Ascending aorta (tissue), 2 donors: ENCODE measurements at regions of chr12 and their contacts with region 1.

Region 1: GRCh38 chr12:70576346-70577282 is 60.6 kb downstream of the PTPRB start:
- DNase-seq: no peak
- H3K4me3 ChIP-seq: no peak overlapping the region
- H3K27ac ChIP-seq: no peak overlapping the region
- H3K4me1 ChIP-seq: peaks cover 0 to 2% of the 10 kb centered on the region in 2 donors
- H3K27me3 ChIP-seq: no peaks in the 10 kb centered on the region
- CTCF ChIP-seq: peak; percentile 54 to 77 (median 70)

Region 2: GRCh38 chr12:69879041-69879960 is 697.3 kb before region 1 on chr12:
- intact Hi-C with region 1: loop called (anchors 1 kb)
- DNase-seq: peak in 1 of 2 donors; percentile 77
- H3K4me3 ChIP-seq: no peak overlapping the region
- H3K27ac ChIP-seq: no peak overlapping the region
- H3K4me1 ChIP-seq: peaks cover 0 to 7% of the 10 kb centered on the region in 2 donors
- H3K27me3 ChIP-seq: no peaks in the 10 kb centered on the region
- CTCF ChIP-seq: peak; percentile 62 to 88 (median 82)

Region 3: GRCh38 chr12:69900720-69901131 is 675.9 kb before region 1 on chr12:
- intact Hi-C with region 1: loop called (anchors 2 kb)
- DNase-seq: peak in 1 of 2 donors; percentile 78
- H3K4me3 ChIP-seq: no peak overlapping the region
- H3K27ac ChIP-seq: no peak overlapping the region
- H3K4me1 ChIP-seq: peaks cover 0 to 7% of the 10 kb centered on the region in 2 donors
- H3K27me3 ChIP-seq: no peaks in the 10 kb centered on the region
- CTCF ChIP-seq: peak; percentile 78 to 83 (median 81)

Region 4: GRCh38 chr12:70598467-70599193 is 22.0 kb after region 1 on chr12:
- intact Hi-C with region 1: no loop called
- DNase-seq: no peak
- H3K4me3 ChIP-seq: no peak overlapping the region
- H3K27ac ChIP-seq: no peak overlapping the region
- H3K4me1 ChIP-seq: no peaks in the 10 kb centered on the region
- H3K27me3 ChIP-seq: no peaks in the 10 kb centered on the region
- CTCF ChIP-seq: no peak